ENCODE measurements at regions of chr2 and their contacts with region 1.

Region 1: DNA sequence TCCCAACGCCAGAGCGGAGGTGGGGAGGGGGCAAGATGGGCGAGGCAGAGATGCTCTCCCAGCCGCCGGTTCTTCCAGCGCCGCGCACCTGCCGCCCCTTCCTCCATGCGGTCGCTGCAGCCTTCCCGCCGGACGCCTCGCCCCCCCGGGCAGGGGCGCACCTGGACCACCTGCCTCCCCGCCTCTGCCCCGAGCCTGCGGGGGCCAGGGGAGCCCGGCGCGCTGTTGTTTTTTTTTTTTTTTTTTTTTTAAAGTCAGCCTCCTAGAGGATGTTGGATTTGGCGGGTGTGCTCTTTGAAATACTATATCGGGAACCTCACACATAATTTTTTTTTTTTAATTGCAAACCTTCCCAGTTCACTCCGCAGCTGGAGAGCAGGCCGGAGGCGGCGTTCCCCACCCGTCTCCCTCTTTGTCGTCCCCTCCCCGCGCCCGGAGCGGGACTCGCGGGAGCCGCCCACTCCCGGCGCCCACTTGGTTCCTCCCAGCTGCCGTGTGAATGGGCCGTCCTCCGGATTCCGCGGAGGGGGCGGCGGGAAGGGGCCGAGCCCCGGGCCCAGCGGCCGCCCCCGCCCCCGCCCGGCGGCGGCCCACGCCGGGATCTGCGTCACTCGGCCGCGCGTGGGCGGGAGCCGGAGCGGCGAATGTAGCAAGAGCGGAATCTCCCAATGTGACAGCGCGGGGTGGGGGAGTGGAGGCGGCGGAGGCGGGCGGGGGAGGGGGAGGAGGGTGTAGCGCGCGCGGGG is 421 bp upstream of the NAB1 start:
- DNase-seq: peak; percentile 94
- H3K4me3 ChIP-seq: peak overlapping the region; percentile 65
- H3K27ac ChIP-seq: peak overlapping the region; percentile 77
- H3K4me1 ChIP-seq: peaks cover 42% of the 10 kb centered on the region
- H3K27me3 ChIP-seq: no peaks in the 10 kb centered on the region
- CTCF ChIP-seq: no peak

Region 2: DNA sequence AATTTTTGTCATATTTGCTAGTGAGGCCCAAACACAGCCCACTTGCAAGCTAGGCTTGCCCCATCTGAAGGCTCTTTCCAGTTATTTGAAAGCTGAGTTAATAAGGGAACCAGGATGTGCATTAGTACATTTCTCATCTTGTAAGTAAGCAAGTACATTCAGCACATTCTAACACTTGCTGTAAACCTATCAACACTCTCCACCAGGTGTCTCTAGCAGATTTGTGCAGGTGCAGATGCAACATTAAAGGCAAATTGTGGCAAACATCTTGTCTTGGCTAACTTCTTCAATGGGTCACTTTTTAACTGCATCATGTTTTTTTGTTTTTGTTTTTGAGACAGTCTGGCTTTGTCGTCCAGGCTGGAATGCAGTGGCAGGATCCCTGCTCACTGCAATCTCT is 265.6 kb before region 1 on chr2:
- CTCF ChIA-PET with region 1: no interaction called
- POLR2A ChIA-PET with region 1: no interaction called
- intact Hi-C with region 1: no loop called
- DNase-seq: peak; percentile 43
- H3K4me3 ChIP-seq: no peak overlapping the region
- H3K27ac ChIP-seq: no peak overlapping the region
- H3K4me1 ChIP-seq: no peaks in the 10 kb centered on the region
- H3K27me3 ChIP-seq: no peaks in the 10 kb centered on the region
- CTCF ChIP-seq: peak; percentile 47

Region 3: GRCh38 chr2:190534310-190535120 is 113.9 kb before region 1 on chr2 and contains the start of gene NEMP2:
- CTCF ChIA-PET with region 1: no interaction called
- POLR2A ChIA-PET with region 1: no interaction called
- intact Hi-C with region 1: loop called (anchors 5 kb)
- DNase-seq: peak; percentile 89
- H3K4me3 ChIP-seq: peak within 1 kb of the TSS; percentile 65
- H3K27ac ChIP-seq: peak within 1 kb of the TSS; percentile 92
- H3K4me1 ChIP-seq: peaks cover 21% of the 10 kb centered on the region
- H3K27me3 ChIP-seq: no peaks in the 10 kb centered on the region
- CTCF ChIP-seq: no peak
- total RNA-seq, gene NEMP2: 12.6 and 13.9 TPM in 2 replicates

Region 4: GRCh38 chr2:191013932-191014652 is 365.6 kb after region 1 on chr2 and contains the start of gene STAT1:
- CTCF ChIA-PET with region 1: no interaction called
- POLR2A ChIA-PET with region 1: no interaction called
- intact Hi-C with region 1: loop called (anchors 10 kb)
- DNase-seq: peak; percentile 95
- H3K4me3 ChIP-seq: peak within 1 kb of the TSS; percentile 81
- H3K27ac ChIP-seq: peak within 1 kb of the TSS; percentile 84
- H3K4me1 ChIP-seq: peaks cover 6% of the 10 kb centered on the region
- H3K27me3 ChIP-seq: no peaks in the 10 kb centered on the region
- CTCF ChIP-seq: no peak
- total RNA-seq, gene STAT1: 69.5 and 76.5 TPM in 2 replicates